Stomach (tissue), 19 donors: ENCODE measurements at regions of chr2 and their contacts with region 1.

Region 1: DNA sequence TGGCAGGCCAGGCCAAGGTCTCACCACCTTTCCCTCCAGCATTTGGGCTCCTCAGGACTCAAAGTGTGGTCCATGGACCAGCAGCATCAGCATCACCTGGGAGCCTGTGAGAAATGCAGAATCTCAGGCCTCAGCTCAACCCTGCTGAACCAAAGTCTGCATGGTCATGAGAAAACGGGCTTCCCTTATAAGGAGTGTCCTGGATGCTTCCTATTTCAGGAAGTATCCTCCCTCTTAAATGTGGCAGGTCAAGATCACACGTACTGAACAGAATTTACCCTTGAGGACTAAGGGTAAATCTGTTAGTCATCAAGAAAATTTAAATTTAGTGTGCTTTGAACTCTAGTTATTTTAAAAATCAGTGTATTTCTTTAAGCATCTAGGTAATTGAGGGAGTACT is 11.8 kb downstream of the CD8A start:
- DNase-seq: no peak
- H3K4me3 ChIP-seq: no peak overlapping the region
- H3K27ac ChIP-seq: no peak overlapping the region
- H3K4me1 ChIP-seq: no peaks in the 10 kb centered on the region
- H3K27me3 ChIP-seq: no peaks in the 10 kb centered on the region
- CTCF ChIP-seq: no peak
- EP300 ChIP-seq: no peak
- POLR2A ChIP-seq: no peak

Region 2: DNA sequence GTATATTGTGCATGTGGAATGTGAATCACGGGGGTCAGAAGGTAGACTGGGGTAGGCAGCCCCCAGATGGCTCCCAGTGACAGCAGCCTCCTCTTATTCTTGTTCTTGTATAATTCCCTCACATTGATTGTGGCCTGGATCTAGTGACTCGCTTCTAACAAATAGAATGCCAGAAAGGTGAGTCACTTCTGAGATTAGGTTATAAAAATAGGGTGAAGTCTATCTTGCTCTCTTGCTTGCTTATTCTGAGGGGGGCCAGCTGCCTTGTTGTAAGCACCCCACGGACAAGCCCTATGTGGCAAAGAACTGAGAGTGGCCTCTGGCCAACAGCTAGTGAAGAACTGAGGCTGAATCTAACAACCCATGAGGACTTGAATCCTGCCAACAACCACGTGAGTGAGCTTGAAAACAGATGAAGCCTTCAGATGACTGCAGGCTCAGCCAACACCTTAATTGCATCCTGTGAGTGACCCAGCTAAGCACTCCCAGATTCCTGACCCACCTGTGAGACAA is 74.4 kb before region 1 on chr2:
- intact Hi-C with region 1: loop called (anchors 10 kb)
- DNase-seq: peak; percentile 62 to 80
- H3K4me3 ChIP-seq: no peak overlapping the region
- H3K27ac ChIP-seq: peak overlapping the region; percentile 60 to 88 (median 68)
- H3K4me1 ChIP-seq: peaks cover 0 to 25% (median 12%) of the 10 kb centered on the region in 4 donors
- H3K27me3 ChIP-seq: no peaks in the 10 kb centered on the region
- CTCF ChIP-seq: no peak
- EP300 ChIP-seq: no peak
- POLR2A ChIP-seq: no peak